ENCODE measurements at regions of chr7 and their contacts with region 1.

Region 1: DNA sequence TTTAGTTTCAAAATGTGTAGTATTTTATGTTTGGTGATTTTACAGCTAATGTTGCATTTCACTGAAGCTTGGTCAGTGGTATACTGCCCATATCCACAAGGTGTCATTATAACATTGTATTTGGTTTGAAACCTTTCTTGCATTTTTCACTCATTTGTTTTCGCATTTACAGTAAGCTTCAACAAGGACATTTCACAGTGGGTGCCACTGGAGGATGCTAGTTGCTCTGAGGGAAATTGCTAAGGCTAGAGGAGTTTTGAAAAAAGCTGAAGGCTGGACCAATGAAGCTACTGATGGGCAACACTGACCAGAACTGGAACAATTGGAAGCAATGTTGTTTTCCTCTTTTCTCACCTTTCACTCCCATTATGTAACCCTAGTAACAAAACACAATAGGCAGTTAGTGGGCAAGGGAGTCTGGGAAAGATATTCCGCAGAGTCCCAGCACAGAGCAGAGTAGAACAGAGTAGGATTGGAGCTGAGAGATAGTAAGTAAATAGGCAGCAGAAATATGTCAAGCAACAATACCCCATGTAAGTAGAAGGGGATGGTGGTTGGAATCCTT is 23.6 kb upstream of the SRI start:
- DNase-seq: peak; percentile 75
- H3K4me3 ChIP-seq: no peak overlapping the region
- H3K27ac ChIP-seq: no peak overlapping the region
- H3K4me1 ChIP-seq: no peaks in the 10 kb centered on the region
- H3K27me3 ChIP-seq: peaks cover 0 to 2% of the 10 kb centered on the region in 2 experiments
- CTCF ChIP-seq: peak; percentile 46 to 52
- POLR2A ChIP-seq: no peak

Region 2: GRCh38 chr7:88344956-88345832 is 101.8 kb after region 1 on chr7:
- CTCF ChIA-PET with region 1: interaction called, 12 read pairs
- POLR2A ChIA-PET with region 1: no interaction called
- dilution Hi-C with region 1: no loop called
- intact Hi-C with region 1: no loop called
- DNase-seq: peak; percentile 25
- H3K4me3 ChIP-seq: no peak overlapping the region
- H3K27ac ChIP-seq: no peak overlapping the region
- H3K4me1 ChIP-seq: no peaks in the 10 kb centered on the region
- H3K27me3 ChIP-seq: peaks cover 0 to 5% of the 10 kb centered on the region in 2 experiments
- CTCF ChIP-seq: peak; percentile 35 to 69
- POLR2A ChIP-seq: no peak

Region 3: DNA sequence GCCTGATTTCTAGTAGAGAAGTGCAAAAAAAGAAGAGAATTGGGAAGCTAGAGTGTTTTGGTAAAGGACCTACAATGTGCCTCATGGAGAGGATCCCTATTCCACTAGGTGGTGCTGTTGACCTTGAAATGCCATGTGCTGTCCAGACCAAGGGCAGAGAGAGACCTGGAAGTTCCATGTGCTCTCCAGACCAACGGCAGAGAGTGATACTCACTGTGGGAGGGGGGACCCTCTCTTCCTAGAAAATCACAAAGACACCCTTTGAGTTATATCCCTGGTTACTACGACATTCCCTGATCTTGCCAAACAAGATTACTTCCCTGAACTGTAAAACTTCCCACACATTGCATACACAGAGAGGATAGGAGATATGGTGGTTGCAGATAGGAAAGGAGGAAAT is 303.4 kb after region 1 on chr7:
- CTCF ChIA-PET with region 1: interaction called, 17 read pairs
- POLR2A ChIA-PET with region 1: no interaction called
- dilution Hi-C with region 1: no loop called
- intact Hi-C with region 1: loop called (anchors 1 kb)
- DNase-seq: peak; percentile 68
- H3K4me3 ChIP-seq: no peak overlapping the region
- H3K27ac ChIP-seq: no peak overlapping the region
- H3K4me1 ChIP-seq: no peaks in the 10 kb centered on the region
- H3K27me3 ChIP-seq: no peaks in the 10 kb centered on the region
- CTCF ChIP-seq: peak; percentile 62 to 64
- POLR2A ChIP-seq: no peak

Region 4: DNA sequence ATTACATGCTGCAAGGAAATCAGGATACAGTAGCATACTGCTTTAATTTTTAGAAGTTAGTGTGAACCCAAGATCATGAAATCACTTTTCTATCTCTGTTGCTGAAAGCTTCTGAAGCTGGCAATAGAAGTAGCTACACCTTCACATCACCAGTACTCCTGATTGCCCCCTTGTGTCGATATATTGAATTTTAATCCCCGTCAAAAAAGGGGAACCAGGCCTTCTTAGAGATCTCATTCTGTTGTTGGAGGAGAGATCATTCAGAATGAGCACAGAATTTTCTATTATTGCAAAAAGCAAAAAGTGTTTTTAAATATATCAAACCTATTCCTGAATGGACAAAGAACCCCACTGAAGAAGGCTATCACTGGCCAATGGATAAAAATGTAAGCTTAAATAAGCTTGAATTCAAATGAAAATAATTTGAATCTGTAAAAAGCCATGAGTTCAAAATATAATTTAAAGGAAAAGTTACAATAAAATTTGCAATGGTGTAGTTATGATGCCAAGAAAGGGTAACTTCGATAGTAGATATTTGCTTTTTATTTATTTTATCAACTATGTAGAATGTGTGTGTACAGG is 591.8 kb after region 1 on chr7:
- CTCF ChIA-PET with region 1: interaction called, 56 read pairs
- POLR2A ChIA-PET with region 1: no interaction called
- dilution Hi-C with region 1: no loop called
- intact Hi-C with region 1: loop called (anchors 1 kb)
- DNase-seq: peak; percentile 58
- H3K4me3 ChIP-seq: no peak overlapping the region
- H3K27ac ChIP-seq: no peak overlapping the region
- H3K4me1 ChIP-seq: no peaks in the 10 kb centered on the region
- H3K27me3 ChIP-seq: no peaks in the 10 kb centered on the region
- CTCF ChIP-seq: peak; percentile 23 to 40
- POLR2A ChIP-seq: no peak

Region 5: GRCh38 chr7:90119178-90119971 is 1875.9 kb after region 1 on chr7:
- CTCF ChIA-PET with region 1: interaction called, 4 read pairs
- POLR2A ChIA-PET with region 1: no interaction called
- dilution Hi-C with region 1: no loop called
- intact Hi-C with region 1: loop called (anchors 10 kb)
- DNase-seq: no peak
- H3K4me3 ChIP-seq: peak overlapping the region in 2 of 3 experiments; percentile 2 to 6
- H3K27ac ChIP-seq: no peak overlapping the region
- H3K4me1 ChIP-seq: peaks cover 2% of the 10 kb centered on the region
- H3K27me3 ChIP-seq: peaks cover 13 to 15% of the 10 kb centered on the region in 2 experiments
- CTCF ChIP-seq: no peak
- POLR2A ChIP-seq: no peak

Measured in endothelial cell of umbilical vein (primary cell).